ENCODE measurements at regions of chr10 and their contacts with region 1.

Region 1: GRCh38 chr10:51389415-51390321 is 309.7 kb downstream of the CSTF2T start:
- DNase-seq: peak; percentile 100
- H3K4me3 ChIP-seq: no peak overlapping the region
- CTCF ChIP-seq: peak; percentile 60

Region 2: DNA sequence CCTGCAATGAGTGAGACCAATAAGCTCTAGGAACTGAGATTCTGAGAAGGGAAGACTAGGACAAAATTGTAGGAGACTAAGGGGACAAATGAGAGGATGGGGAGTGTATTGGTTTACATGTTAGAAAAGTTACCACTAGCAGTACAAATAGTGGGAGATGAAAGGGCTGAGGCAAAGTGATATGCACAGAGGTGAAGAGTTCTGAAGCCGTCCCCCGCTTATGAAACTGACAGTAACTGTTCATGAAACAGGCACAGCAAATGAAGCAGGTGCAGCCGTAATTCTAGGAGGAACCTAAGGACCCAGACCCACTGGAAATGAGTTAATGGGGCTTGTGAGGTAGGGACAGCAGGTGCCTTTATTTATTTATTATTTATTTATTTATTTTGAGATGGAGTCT is 104.1 kb before region 1 on chr10:
- CTCF ChIA-PET with region 1: no interaction called
- POLR2A ChIA-PET with region 1: no interaction called
- DNase-seq: no peak
- H3K4me3 ChIP-seq: no peak overlapping the region
- CTCF ChIP-seq: no peak

Region 3: GRCh38 chr10:51377932-51378599 is 11.6 kb before region 1 on chr10:
- CTCF ChIA-PET with region 1: interaction called, 12 read pairs
- POLR2A ChIA-PET with region 1: interaction called, 7 read pairs
- DNase-seq: no peak
- H3K4me3 ChIP-seq: no peak overlapping the region
- CTCF ChIP-seq: no peak